ENCODE measurements at regions of chr6 and their contacts with region 1.

Region 1: GRCh38 chr6:116531675-116532570 is 13.6 kb downstream of the TRAPPC3L start:
- DNase-seq: peak; percentile 34
- H3K4me3 Mint-ChIP-seq: no peak overlapping the region
- H3K27ac Mint-ChIP-seq: no peak overlapping the region
- H3K4me1 Mint-ChIP-seq: peaks cover 1% of the 10 kb centered on the region
- H3K27me3 Mint-ChIP-seq: peaks cover 53% of the 10 kb centered on the region

Region 2: GRCh38 chr6:116268589-116269293 is 263.2 kb before region 1 on chr6:
- intact Hi-C with region 1: loop called (anchors 5 kb)
- DNase-seq: no peak
- H3K4me3 Mint-ChIP-seq: no peak overlapping the region
- H3K27ac Mint-ChIP-seq: no peak overlapping the region
- H3K4me1 Mint-ChIP-seq: peaks cover 10% of the 10 kb centered on the region
- H3K27me3 Mint-ChIP-seq: no peaks in the 10 kb centered on the region

Region 3: GRCh38 chr6:116371120-116371917 is 160.6 kb before region 1 on chr6:
- intact Hi-C with region 1: loop called (anchors 5 kb)
- DNase-seq: no peak
- H3K4me3 Mint-ChIP-seq: peak overlapping the region; percentile 72
- H3K27ac Mint-ChIP-seq: no peak overlapping the region
- H3K4me1 Mint-ChIP-seq: peaks cover 10% of the 10 kb centered on the region
- H3K27me3 Mint-ChIP-seq: peaks cover 61% of the 10 kb centered on the region

Region 4: GRCh38 chr6:116436531-116436930 is 95.4 kb before region 1 on chr6:
- intact Hi-C with region 1: no loop called
- DNase-seq: no peak
- H3K4me3 Mint-ChIP-seq: no peak overlapping the region
- H3K27ac Mint-ChIP-seq: no peak overlapping the region
- H3K4me1 Mint-ChIP-seq: no peaks in the 10 kb centered on the region
- H3K27me3 Mint-ChIP-seq: peaks cover 22% of the 10 kb centered on the region

Region 5: DNA sequence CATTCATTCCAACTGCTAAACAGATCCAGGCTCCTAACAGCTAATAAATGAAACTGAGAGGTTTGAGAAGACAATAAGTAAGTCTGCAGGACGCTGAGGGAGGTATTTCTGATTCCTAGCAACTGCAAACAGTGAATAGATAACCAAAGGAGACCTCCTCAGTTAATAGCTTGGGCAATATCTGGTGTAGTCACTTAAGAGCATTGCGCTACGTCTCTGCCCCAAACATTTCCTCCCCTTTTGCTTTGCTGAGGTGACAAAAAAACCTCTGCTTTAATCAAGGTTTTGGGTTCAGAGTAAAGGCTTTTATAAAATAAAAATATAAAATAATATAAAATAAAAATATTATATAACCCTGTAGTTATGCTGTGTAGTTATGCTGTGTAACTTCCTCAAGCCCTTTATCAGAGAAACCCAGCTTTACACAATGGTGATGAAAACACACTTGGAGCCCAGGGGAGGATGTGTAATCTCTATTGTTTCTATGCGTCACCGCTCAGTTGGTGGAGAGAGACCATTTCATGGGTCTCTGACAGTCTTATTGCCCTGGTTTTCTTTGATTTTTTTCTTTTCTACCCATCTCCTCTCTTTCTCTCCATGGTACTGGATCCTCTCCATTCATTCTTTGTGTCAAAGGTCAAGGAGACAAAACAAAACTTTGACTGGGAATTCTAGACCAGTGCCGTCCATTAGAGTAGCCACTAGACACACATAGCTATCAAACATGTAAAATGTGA is 39.4 kb before region 1 on chr6:
- intact Hi-C with region 1: no loop called
- DNase-seq: no peak
- H3K4me3 Mint-ChIP-seq: no peak overlapping the region
- H3K27ac Mint-ChIP-seq: no peak overlapping the region
- H3K4me1 Mint-ChIP-seq: no peaks in the 10 kb centered on the region
- H3K27me3 Mint-ChIP-seq: peaks cover 39% of the 10 kb centered on the region

Region 6: DNA sequence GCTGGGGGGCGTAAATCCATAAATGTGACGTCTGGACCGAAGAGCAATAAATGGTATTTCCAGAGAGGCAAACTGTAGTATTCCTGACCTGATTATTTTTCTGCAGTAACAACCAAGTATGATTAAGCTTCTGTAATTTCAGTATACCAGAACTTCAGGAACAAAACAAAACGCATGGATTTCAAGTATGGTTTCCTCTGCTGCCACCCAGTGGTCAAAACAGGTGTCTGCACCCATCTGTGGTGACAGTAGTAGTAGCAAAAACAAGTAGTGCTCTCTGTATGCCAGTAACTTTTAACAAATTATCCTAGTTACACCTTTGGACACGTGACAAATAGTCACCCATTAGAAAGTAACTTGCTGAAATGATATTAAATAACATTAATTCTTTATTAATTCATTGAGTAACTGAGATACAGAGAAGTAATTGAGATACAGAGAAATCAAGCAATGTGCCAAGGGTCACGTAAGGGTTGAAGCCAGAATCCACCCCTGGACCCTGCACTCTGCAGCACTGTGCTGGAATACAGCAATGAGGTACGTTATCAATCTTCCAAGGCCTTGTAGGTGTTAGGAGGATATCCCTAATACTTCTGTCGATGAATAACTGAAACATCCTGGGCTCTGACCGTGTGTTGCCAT is 29.6 kb after region 1 on chr6:
- intact Hi-C with region 1: loop called (anchors 1 kb)
- DNase-seq: peak; percentile 50
- H3K4me3 Mint-ChIP-seq: no peak overlapping the region
- H3K27ac Mint-ChIP-seq: no peak overlapping the region
- H3K4me1 Mint-ChIP-seq: peaks cover 3% of the 10 kb centered on the region
- H3K27me3 Mint-ChIP-seq: peaks cover 21% of the 10 kb centered on the region